Heart right ventricle (tissue), 16 donors: ENCODE measurements at regions of chr20 and their contacts with region 1.

Region 1: GRCh38 chr20:11274141-11274594 is 600.4 kb upstream of the JAG1 start:
- DNase-seq: peak in 1 of 2 donors; percentile 45
- ATAC-seq: peak; percentile 69 to 95 (median 92)
- H3K4me3 ChIP-seq: no peak overlapping the region
- H3K27ac ChIP-seq: no peak overlapping the region
- H3K4me1 ChIP-seq: peaks cover 0 to 9% (median 5%) of the 10 kb centered on the region in 9 donors
- H3K27me3 ChIP-seq: no peaks in the 10 kb centered on the region
- CTCF ChIP-seq: peak; percentile 51 to 86 (median 73)

Region 2: DNA sequence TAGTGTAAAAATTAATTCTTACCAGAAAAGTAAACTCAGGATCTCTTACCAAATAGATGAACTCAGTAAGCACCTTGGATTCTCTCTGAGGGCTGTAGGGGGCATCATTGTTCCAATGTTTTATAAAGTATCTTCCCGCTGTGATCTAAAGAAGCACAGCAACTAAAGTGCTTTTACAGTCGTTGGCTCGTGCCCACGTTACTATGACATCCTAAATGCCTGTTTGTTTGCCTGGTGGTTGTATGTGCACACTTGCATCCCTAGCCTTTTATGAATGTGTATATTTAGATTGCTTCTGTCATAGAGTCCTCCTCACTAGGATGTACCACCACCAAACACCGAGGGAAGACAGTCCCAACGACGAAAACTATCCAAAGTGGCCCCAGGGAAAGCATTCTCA is 804.6 kb before region 1 on chr20:
- intact Hi-C with region 1: loop called in 5 of 10 experiments (anchors 2 to 10 kb)
- DNase-seq: peak in 1 of 2 donors; percentile 61
- ATAC-seq: peak in 7 of 8 donors; percentile 44 to 81 (median 75)
- H3K4me3 ChIP-seq: no peak overlapping the region
- H3K27ac ChIP-seq: peak overlapping the region in 2 of 10 donors; percentile 3 to 29
- H3K4me1 ChIP-seq: peaks cover 0 to 60% (median 51%) of the 10 kb centered on the region in 9 donors
- H3K27me3 ChIP-seq: no peaks in the 10 kb centered on the region
- CTCF ChIP-seq: peak; percentile 38 to 80 (median 69)

Region 3: DNA sequence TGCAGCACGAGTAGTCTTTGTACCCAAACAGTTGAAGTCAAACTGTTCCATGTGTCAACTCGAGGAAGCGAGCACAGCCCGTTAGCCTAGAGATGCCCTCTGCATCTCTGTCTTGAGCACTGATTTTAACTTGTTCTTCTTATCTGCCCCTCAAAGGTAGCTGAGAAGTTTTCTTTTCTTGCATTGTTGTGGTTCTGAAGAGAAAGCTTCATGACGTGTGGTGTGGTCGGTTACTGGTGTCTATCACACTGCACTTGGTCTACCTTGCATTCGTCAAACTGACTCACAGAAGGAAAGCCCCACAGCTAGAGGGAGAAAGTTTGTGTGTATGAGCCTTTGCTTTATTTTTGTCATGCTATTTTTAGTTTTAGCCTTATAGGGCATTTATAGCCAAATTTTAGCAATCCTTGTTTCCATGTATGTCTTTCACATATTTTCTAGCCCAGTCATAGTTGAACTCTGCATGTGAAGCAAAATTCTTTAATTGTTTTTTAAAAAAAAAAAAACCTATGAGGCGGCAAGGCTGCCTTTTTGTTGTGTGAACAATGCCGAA is 715.5 kb before region 1 on chr20:
- intact Hi-C with region 1: loop called (anchors 1 to 5 kb)
- DNase-seq: no peak
- ATAC-seq: peak in 3 of 8 donors; percentile 42 to 65 (median 47)
- H3K4me3 ChIP-seq: no peak overlapping the region
- H3K27ac ChIP-seq: peak overlapping the region in 4 of 10 donors; percentile 2 to 25 (median 16)
- H3K4me1 ChIP-seq: peaks cover 0 to 11% (median 0%) of the 10 kb centered on the region in 9 donors
- H3K27me3 ChIP-seq: no peaks in the 10 kb centered on the region
- CTCF ChIP-seq: peak in 3 of 9 donors; percentile 15 to 29 (median 24)

Region 4: DNA sequence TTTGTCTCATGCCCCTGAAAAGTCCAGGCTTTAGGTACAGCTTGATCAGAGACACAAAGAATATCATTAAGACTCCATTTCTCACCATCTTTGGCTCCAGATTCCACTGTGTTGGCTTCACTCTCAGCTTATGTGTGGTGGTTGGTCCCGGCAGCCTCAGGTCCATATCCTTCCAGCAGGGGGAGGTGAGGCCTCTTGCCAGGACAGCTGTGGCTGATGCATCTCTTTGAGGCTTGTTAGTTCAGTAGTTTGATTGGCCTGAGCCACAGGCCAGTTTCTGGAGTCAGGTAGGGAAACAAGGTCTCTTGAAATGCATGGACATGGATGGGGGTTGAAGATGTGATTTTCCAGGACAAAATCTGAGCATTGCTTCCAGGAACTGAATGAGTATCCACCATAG is 662.8 kb before region 1 on chr20:
- intact Hi-C with region 1: loop called in 1 of 10 experiments (anchors 5 kb)
- DNase-seq: peak; percentile 48 to 70
- ATAC-seq: peak in 7 of 8 donors; percentile 40 to 76 (median 69)
- H3K4me3 ChIP-seq: no peak overlapping the region
- H3K27ac ChIP-seq: peak overlapping the region in 6 of 10 donors; percentile 39 to 90 (median 80)
- H3K4me1 ChIP-seq: peaks cover 0 to 35% (median 23%) of the 10 kb centered on the region in 9 donors
- H3K27me3 ChIP-seq: no peaks in the 10 kb centered on the region
- CTCF ChIP-seq: peak; percentile 26 to 69 (median 57)

Region 5: GRCh38 chr20:10654630-10655029 is 619.5 kb before region 1 on chr20:
- intact Hi-C with region 1: loop called in 1 of 10 experiments (anchors 10 kb)
- DNase-seq: no peak
- ATAC-seq: peak in 4 of 8 donors; percentile 17 to 29 (median 22)
- H3K4me3 ChIP-seq: no peak overlapping the region
- H3K27ac ChIP-seq: peak overlapping the region in 8 of 10 donors; percentile 45 to 84 (median 72)
- H3K4me1 ChIP-seq: peaks cover 24 to 100% (median 81%) of the 10 kb centered on the region in 9 donors
- H3K27me3 ChIP-seq: no peaks in the 10 kb centered on the region
- CTCF ChIP-seq: no peak